ENCODE measurements at regions of chr12 and their contacts with region 1.

Region 1: GRCh38 chr12:12272869-12273268 is 6.0 kb upstream of the LRP6 start:
- DNase-seq: no peak
- ATAC-seq: no peak
- H3K4me3 ChIP-seq: no peak overlapping the region
- H3K27ac ChIP-seq: no peak overlapping the region
- H3K4me1 ChIP-seq: peaks cover 23% of the 10 kb centered on the region
- H3K27me3 ChIP-seq: no peaks in the 10 kb centered on the region
- CTCF ChIP-seq: no peak
- EP300 ChIP-seq: no peak
- POLR2A ChIP-seq: no peak
- RAD21 ChIP-seq: no peak

Region 2: DNA sequence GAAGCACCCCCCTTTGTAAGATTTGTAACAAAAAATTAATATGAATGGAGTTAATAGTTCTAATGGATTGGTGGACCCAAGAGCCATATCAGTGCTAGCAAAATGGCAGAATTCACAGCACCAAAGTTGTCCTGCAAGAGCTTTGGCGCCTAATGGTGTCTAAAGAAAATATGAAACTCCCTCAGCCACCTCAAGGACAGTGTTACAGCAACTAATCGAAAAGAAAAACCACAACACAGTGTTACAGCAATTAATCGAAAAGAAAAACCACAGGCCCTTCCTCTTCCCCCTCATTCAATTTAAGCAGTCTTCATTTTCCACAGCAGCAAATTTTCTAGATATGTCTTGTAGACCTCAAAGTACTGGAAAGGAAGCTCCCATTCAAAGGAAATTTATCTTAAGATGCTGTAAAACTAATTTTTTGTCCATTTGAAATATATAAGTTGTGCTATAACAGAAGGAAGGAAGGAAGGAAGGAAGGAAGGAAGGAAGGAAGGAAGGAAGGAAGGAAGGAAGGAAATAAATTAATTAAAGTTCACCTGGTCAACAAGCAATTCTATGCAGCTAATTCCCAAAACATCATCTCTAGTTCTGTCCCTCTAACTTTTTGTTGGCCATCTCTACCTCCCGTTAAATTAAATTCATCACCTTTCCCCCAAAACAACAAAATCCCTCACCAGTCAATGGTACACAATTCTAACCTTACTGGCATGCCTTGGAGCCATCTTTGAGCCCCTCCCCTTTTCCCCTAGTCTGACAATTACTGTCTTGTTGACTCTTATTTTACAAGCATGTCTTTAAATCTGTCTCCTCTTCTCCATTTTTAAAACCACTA is 23.4 kb before region 1 on chr12:
- CTCF ChIA-PET with region 1: no interaction called
- POLR2A ChIA-PET with region 1: no interaction called
- in situ Hi-C with region 1: no loop called
- intact Hi-C with region 1: no loop called
- DNase-seq: no peak
- ATAC-seq: no peak
- H3K4me3 ChIP-seq: no peak overlapping the region
- H3K27ac ChIP-seq: no peak overlapping the region
- H3K4me1 ChIP-seq: peaks cover 33% of the 10 kb centered on the region
- H3K27me3 ChIP-seq: no peaks in the 10 kb centered on the region
- CTCF ChIP-seq: no peak
- EP300 ChIP-seq: no peak
- POLR2A ChIP-seq: no peak
- RAD21 ChIP-seq: no peak

Region 3: DNA sequence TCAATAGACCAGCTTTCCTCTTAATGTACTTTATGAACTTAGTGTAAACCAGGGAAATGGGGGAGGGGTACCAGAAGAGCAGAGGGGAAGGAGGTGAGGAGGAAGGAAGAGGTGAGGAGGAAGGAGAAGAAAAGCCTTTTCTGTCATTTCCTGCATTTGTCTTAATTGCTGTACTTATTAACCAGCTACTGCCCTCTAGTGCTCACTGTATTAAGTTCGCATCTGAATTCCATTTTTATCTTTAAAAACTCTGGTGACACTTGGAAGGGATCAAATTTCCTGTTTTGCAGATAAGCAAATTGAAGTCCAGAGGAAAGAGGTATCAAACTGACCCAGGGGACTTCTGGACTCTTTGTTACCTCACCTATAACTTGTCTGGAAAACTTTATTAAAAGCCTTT is 54.9 kb after region 1 on chr12:
- CTCF ChIA-PET with region 1: no interaction called
- POLR2A ChIA-PET with region 1: no interaction called
- in situ Hi-C with region 1: loop called (anchors 10 kb)
- intact Hi-C with region 1: no loop called
- DNase-seq: peak; percentile 65
- ATAC-seq: peak; percentile 35; the same call in 1 of the 3 replicates
- H3K4me3 ChIP-seq: no peak overlapping the region
- H3K27ac ChIP-seq: no peak overlapping the region
- H3K4me1 ChIP-seq: peaks cover 9% of the 10 kb centered on the region
- H3K27me3 ChIP-seq: no peaks in the 10 kb centered on the region
- CTCF ChIP-seq: peak; percentile 80
- EP300 ChIP-seq: no peak
- POLR2A ChIP-seq: no peak
- RAD21 ChIP-seq: peak; percentile 73